ENCODE measurements at regions of chr19 and their contacts with region 1.

Region 1: DNA sequence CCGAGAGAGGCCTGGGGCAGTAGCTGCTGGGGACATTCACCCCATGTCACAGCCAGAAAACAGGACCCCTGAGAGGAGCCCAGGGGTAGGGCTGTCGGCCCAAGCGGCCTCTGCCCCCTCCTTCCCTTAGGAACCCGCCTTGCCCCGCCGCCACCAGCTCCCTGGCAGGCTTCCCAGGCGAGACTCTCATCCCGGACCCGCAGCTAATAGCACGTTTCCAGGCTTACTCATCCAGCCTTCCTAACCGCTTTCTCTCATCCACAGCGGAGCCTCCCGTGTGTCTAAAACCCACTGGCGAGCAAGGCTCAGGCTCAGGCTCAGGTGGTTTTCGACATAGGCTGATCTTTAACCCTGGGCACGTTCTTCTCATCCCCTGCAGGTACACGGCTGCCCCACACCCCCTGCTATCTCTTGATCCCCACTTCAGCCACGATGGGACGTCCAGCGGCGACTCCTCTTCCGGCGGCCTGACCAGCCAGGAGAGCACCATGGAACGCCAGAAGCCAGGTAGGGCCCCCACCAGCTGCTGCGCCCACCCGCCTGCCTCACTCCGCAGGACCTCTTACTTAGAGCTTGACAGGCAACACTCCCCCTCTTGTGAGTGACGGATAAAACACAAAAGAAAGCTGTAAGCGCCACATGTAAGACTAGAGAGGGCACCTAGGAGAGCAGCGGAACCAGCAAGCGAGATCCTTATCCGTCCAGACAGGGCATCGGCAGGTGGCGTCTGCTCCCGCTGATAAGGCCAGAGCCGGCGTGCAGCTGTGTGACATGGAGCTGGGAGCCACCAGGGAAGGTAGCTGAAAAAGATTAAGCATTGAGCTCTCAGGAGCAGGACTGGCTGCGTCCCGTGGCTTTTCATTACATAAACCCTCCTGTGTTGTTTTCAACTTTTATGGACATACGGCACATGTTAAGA is 71.3 kb downstream of the DPF1 start:
- H3K4me3 ChIP-seq: no peak overlapping the region
- H3K27ac ChIP-seq: no peak overlapping the region
- H3K4me1 ChIP-seq: no peaks in the 10 kb centered on the region
- CTCF ChIP-seq: no peak

Region 2: GRCh38 chr19:38115271-38115802 is 37.4 kb before region 1 on chr19:
- CTCF ChIA-PET with region 1: no interaction called
- POLR2A ChIA-PET with region 1: no interaction called
- H3K4me3 ChIP-seq: no peak overlapping the region
- H3K27ac ChIP-seq: no peak overlapping the region
- H3K4me1 ChIP-seq: no peaks in the 10 kb centered on the region
- CTCF ChIP-seq: no peak

Region 3: DNA sequence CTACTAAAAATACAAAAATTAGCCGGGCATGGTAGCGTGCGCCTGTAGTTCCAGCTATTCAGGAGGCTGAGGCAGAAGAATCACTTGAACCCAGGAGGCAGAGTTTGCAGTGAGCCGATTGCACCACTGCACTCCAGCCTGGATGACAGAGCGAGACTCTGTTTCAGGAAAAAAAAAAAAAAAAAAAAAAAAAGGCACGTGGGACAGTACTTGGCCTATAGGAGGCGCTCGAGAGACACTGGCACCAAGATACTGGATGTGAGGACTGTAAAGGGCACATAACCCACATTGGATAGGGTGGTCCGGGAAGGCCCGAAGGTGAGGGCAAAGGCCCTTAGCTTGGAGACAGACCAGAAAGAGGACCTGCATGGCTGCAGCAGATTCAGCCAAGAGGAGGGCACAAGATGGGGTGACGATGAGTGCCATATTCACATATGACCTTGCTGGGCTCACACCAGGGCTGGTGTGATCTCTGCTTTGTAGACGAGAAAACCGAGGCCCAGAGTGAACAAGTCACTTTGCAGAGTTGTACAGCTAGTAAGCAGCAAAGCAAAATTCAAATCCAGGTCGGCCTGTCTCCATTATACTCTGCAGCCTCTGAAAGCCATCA is 18.1 kb before region 1 on chr19:
- CTCF ChIA-PET with region 1: interaction called, 51 read pairs
- POLR2A ChIA-PET with region 1: no interaction called
- H3K4me3 ChIP-seq: no peak overlapping the region
- H3K27ac ChIP-seq: no peak overlapping the region
- H3K4me1 ChIP-seq: no peaks in the 10 kb centered on the region
- CTCF ChIP-seq: peak; percentile 96

Region 4: GRCh38 chr19:38304866-38305429 is 152.2 kb after region 1 on chr19:
- CTCF ChIA-PET with region 1: no interaction called
- POLR2A ChIA-PET with region 1: no interaction called
- H3K4me3 ChIP-seq: no peak overlapping the region
- H3K27ac ChIP-seq: peak overlapping the region; percentile 50
- H3K4me1 ChIP-seq: peaks cover 11% of the 10 kb centered on the region
- CTCF ChIP-seq: no peak

Measured in HEK293 (cell line).